Activated CD4-positive, alpha-beta T cell treated with anti-CD3 and anti-CD28 coated beads, Interleukin-2, amount 10 ng/mL, durations not matched to agents 24 days and 14 days (primary cell): ENCODE measurements at regions of chr1 and their contacts with region 1.

Region 1: DNA sequence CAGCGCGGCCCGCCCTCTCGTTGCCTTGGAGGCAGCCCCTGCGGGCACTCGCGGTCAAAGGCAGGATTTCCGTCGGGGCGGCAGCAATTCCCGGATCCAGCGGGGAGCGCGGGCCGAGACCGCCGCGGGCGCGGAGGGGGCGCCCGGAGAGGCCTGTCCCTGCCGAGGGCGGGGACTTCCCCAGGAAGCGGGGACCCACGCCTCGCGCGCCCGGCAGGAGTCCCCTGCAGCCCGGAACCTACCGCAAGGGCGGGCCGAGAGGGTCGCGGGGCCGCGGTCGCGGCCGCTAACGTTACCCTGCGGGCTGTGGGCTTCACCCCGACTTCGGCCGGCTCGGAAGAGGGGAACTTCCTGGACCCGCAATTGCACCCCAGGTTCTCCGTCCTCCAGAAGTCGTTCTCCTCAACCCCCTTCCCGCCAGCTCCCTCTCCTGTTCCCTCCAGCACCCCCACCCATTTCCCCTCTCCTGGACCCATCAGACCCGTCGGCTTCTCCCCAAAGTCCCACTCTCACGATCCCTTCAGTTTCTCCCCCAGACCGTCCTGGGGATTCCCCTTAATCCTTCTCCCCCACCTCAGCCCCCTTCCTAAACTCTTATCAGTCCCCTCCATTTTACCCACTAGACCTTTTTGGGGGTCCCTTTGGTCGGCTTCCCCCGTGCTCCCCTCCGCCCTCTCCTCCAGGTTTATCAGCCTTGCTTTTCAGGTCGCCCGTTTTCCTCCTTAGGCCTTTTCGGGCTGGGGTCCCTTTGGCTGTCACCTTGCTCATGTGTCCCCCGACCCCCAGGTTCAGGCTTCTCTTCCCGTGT is 604 bp downstream of the FGR start:
- DNase-seq: peak; percentile 89
- H3K4me3 Mint-ChIP-seq: peak overlapping the region; percentile 72
- H3K27ac Mint-ChIP-seq: peak overlapping the region; percentile 84
- H3K4me1 Mint-ChIP-seq: peaks cover 65% of the 10 kb centered on the region
- H3K27me3 Mint-ChIP-seq: no peaks in the 10 kb centered on the region

Region 2: DNA sequence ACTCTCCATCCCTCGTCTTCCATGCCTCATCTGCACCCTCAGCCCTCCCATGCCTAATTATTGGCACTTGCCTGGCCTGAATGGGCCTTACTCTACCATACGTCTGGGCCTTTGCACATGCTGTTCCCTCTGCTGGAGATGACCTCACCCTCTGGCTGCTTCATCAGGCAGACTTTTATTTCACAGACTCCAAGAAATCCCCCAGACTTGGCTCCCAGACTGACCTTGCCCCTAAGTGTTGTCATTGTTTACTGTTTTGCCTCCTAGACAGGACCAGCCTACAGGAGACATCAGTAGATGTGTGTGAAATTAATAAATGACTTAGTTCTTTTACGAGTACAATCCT is 25.2 kb before region 1 on chr1:
- intact Hi-C with region 1: loop called (anchors 1 kb)
- DNase-seq: no peak
- H3K4me3 Mint-ChIP-seq: no peak overlapping the region
- H3K27ac Mint-ChIP-seq: no peak overlapping the region
- H3K4me1 Mint-ChIP-seq: peaks cover 24% of the 10 kb centered on the region
- H3K27me3 Mint-ChIP-seq: no peaks in the 10 kb centered on the region

Region 3: DNA sequence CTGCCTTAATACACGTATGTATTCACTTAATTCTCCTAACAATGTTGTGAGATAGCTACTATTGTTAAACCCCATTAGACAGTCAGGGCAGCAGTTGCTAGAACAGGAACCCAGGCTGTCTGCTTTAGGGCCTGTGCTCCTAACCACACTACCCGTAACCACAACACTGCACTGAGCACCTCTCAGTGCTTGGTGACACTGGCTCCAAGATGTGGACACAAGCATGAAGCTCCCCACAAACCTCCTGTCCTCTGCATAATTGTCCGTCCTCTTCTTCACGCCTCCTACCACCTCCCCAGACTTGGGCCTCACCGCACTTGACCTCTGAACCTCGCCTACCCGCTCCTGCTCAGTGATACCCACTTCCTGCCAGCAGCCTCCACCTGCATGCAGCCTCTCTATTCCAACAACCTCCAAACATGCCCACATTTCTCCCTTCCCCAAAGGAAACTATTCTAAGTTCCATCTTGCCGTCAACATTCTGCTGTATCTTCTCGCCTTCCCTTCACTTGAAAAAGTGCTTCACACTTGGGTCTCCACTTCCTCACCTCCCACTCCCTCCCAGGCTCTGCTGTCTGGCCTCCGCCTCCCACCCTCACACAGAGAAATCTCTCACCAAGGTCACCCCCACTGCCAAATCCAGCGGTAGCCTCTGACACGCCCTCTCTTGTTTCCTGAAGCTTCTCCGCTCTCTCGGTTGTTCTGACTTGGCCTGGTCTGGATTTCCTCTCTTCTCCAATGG is 15.9 kb before region 1 on chr1:
- intact Hi-C with region 1: loop called (anchors 2 kb)
- DNase-seq: peak; percentile 85
- H3K4me3 Mint-ChIP-seq: peak overlapping the region; percentile 42
- H3K27ac Mint-ChIP-seq: peak overlapping the region; percentile 84
- H3K4me1 Mint-ChIP-seq: peaks cover 47% of the 10 kb centered on the region
- H3K27me3 Mint-ChIP-seq: no peaks in the 10 kb centered on the region

Region 4: DNA sequence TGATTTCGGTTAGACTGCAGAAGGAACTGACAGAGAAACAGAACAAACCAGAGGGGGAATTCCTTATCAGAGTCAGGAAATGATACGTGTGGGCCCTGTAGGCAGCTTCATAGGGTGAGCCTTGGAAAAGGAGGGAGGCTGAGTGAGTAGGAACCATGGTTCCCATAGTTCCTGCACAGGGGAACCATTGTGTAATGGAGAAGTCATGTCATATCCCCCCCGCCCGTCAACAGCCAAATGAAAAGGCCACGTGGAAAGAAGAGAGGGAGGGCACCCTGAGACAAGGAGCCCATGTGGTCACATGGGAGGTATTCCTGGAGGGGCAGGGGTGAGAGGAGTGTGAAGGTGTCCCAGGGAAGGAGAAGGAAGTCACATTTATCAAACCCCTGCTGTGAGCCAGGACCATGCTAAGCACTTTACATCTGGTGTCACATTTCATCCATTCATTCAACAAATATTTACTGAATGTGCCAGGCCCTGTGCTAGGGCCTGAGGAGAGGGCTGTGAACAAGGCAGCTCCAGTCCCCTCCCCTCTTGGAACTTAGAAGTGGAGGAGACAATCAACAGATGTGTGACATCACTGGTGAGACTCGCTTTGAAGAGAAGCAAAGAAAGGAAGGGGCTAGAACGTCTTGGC is 16.3 kb after region 1 on chr1:
- intact Hi-C with region 1: loop called (anchors 1 kb)
- DNase-seq: peak; percentile 63
- H3K4me3 Mint-ChIP-seq: no peak overlapping the region
- H3K27ac Mint-ChIP-seq: peak overlapping the region; percentile 90
- H3K4me1 Mint-ChIP-seq: peaks cover 36% of the 10 kb centered on the region
- H3K27me3 Mint-ChIP-seq: no peaks in the 10 kb centered on the region